Common myeloid progenitor, CD34-positive (primary cell): ENCODE measurements at regions of chr17 and their contacts with region 1.

Region 1: GRCh38 chr17:79810130-79811010 is 13.5 kb upstream of the CBX8 start:
- DNase-seq: peak; percentile 76 to 87 (median 85)
- H3K4me3 ChIP-seq: peak overlapping the region in 4 of 7 experiments; percentile 8 to 19 (median 12)
- H3K27ac ChIP-seq: no peak overlapping the region
- H3K4me1 ChIP-seq: peaks cover 0 to 60% (median 56%) of the 10 kb centered on the region in 4 experiments
- H3K27me3 ChIP-seq: peaks cover 0 to 91% (median 62%) of the 10 kb centered on the region in 5 experiments

Region 2: DNA sequence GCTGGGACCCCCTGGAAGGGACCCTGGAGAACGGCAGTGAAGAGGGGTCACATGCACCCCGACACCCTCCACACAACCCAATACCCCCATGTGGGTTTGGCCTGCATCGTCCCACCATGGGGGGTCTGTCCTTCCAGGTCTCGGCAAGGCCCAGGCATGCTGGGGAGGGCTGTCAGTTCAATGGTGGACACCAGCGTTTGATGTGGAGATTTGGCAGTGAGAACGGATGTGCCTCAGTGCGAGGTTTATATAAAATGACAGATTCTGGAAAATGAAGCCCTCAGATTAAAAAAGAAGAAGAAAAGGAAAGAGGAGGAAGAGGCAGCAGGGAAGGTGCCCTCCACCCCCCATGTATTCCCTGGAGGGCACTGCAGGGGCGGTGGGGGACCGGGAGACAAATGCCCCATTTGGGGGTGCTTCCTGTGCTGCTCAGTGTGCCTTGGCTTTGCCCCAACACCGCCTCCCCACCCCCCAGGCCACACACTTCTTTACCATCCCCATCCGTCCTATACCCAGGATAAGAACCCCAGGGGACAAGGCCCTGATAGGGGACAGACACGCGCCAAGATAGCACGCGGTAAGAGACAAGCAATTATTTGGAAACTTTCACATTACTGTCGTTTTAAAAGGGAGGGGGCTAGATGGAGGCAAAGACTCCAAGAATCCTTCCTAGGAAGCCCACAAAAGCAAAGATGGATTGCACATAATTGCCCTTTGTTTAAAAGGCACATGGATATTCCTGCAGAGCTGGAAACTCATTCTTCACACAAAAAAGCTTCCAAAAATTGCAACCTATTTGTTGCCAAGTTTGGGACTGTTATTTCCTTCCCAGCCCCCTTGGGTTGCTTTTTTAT is 220.5 kb before region 1 on chr17:
- CTCF ChIA-PET with region 1: no interaction called
- POLR2A ChIA-PET with region 1: no interaction called
- DNase-seq: no peak
- H3K4me3 ChIP-seq: no peak overlapping the region
- H3K27ac ChIP-seq: no peak overlapping the region
- H3K4me1 ChIP-seq: no peaks in the 10 kb centered on the region
- H3K27me3 ChIP-seq: peaks cover 0 to 70% (median 4%) of the 10 kb centered on the region in 5 experiments

Region 3: GRCh38 chr17:79747508-79748295 is 62.7 kb before region 1 on chr17:
- CTCF ChIA-PET with region 1: interaction called, 12 read pairs
- POLR2A ChIA-PET with region 1: no interaction called
- DNase-seq: peak in 2 of 3 donors; percentile 33 to 34
- H3K4me3 ChIP-seq: peak overlapping the region in 2 of 7 experiments; percentile 26 to 28
- H3K27ac ChIP-seq: no peak overlapping the region
- H3K4me1 ChIP-seq: peaks cover 0 to 29% (median 18%) of the 10 kb centered on the region in 4 experiments
- H3K27me3 ChIP-seq: peaks cover 0 to 62% (median 31%) of the 10 kb centered on the region in 5 experiments

Region 4: DNA sequence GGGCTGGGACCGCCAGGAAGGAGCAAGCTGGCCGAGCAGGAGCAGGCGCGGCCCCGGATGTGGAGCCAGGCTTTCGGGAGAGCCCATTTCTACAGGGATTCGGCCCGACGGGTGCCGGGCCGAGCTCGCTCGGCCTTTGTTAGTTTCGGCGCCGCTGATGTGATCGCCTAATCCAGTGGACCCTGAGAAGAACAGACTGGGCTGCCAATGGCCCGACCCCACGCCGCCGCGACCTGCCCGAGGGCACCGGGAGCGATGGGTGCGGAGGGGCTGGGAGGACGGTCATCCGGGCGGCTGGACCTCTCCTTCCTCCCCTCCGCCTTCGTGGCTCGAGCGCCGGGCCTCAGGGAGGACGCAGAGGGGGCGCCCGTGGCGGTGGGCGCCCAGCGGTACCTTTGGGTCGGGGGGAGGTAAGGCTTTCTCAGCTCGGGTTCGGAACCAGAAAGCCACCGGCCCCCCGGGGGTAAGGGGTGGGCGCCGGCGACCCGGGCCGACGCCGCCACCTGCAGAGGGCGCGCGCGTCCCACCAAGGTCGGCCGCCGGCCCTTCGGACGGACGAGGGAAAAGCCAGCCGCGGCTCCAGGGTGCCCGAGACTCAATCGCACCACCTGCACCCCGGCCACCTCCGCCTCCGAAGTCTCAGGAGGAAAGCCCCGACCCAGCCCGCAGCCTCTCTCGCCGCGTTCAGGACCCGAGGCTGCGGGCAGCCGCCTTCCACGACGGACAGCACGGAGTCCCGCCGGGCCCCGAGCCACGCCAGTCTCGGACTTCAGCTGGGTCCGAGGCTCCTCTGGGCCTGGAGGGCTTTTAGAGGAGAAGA is 20.6 kb before region 1 on chr17:
- CTCF ChIA-PET with region 1: interaction called, 12 read pairs
- POLR2A ChIA-PET with region 1: no interaction called
- DNase-seq: no peak
- H3K4me3 ChIP-seq: peak overlapping the region in 6 of 7 experiments; percentile 15 to 64 (median 58)
- H3K27ac ChIP-seq: no peak overlapping the region
- H3K4me1 ChIP-seq: peaks cover 0 to 39% (median 25%) of the 10 kb centered on the region in 4 experiments
- H3K27me3 ChIP-seq: peaks cover 0 to 58% (median 27%) of the 10 kb centered on the region in 5 experiments

Region 5: GRCh38 chr17:79826204-79826680 is 15.9 kb after region 1 on chr17:
- CTCF ChIA-PET with region 1: interaction called, 10 read pairs
- POLR2A ChIA-PET with region 1: interaction called, 4 read pairs
- DNase-seq: peak in 1 of 3 donors; percentile 57
- H3K4me3 ChIP-seq: peak overlapping the region in 3 of 7 experiments; percentile 6 to 20 (median 6)
- H3K27ac ChIP-seq: peak overlapping the region in 1 of 2 experiments; percentile 47
- H3K4me1 ChIP-seq: peaks cover 9 to 66% (median 39%) of the 10 kb centered on the region in 4 experiments
- H3K27me3 ChIP-seq: no peaks in the 10 kb centered on the region

Region 6: GRCh38 chr17:79839363-79840268 is 29.2 kb after region 1 on chr17 and contains the start of gene CBX4:
- CTCF ChIA-PET with region 1: interaction called, 36 read pairs
- POLR2A ChIA-PET with region 1: interaction called, 4 read pairs
- DNase-seq: peak; percentile 89 to 94 (median 93)
- H3K4me3 ChIP-seq: peak within 1 kb of the TSS; percentile 53 to 98 (median 87)
- H3K27ac ChIP-seq: peak within 1 kb of the TSS in 1 of 2 experiments; percentile 79
- H3K4me1 ChIP-seq: peaks cover 0 to 82% (median 77%) of the 10 kb centered on the region in 4 experiments
- H3K27me3 ChIP-seq: peaks cover 0 to 48% (median 25%) of the 10 kb centered on the region in 5 experiments

Region 7: DNA sequence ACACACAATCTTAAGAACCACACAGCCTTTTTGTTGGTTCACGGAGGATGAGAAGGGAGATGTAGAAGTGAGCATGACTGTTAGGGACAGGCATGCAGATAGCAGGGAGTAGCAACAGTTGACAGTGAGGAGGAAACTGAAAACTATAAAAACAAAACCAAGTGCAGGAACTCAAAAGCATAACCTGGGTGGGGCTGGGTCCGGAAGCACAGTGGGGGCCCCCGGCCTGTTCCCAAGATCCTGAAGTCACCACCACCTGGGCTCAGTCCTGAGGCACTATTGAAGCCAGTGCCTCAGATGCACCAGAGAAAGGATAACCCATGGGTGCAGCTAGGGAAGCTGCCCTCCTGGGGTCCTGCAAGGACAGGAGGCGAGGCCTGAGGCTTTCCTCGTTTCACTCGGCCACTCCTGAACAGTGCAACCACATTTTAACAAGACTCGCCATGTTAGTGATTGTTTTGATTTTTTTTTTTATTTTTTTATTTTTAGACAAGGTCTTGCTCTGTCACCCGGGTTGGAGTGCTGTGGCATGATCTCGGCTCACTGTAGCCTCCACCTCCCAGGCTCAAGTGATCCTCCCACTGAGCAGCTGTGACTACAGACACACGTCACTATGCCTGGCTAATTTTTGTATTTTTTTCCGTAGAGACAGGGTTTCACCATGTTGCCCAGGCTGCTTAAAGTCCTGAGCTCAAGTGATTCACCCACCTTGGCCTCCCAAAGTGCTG is 56.6 kb after region 1 on chr17:
- CTCF ChIA-PET with region 1: no interaction called
- POLR2A ChIA-PET with region 1: no interaction called
- DNase-seq: no peak
- H3K4me3 ChIP-seq: no peak overlapping the region
- H3K27ac ChIP-seq: no peak overlapping the region
- H3K4me1 ChIP-seq: peaks cover 0 to 3% (median 0%) of the 10 kb centered on the region in 4 experiments
- H3K27me3 ChIP-seq: peaks cover 0 to 5% (median 0%) of the 10 kb centered on the region in 5 experiments

Region 8: GRCh38 chr17:79915850-79916430 is 105.6 kb after region 1 on chr17:
- CTCF ChIA-PET with region 1: interaction called, 28 read pairs
- POLR2A ChIA-PET with region 1: no interaction called
- DNase-seq: peak; percentile 42 to 56 (median 51)
- H3K4me3 ChIP-seq: no peak overlapping the region
- H3K27ac ChIP-seq: no peak overlapping the region
- H3K4me1 ChIP-seq: peaks cover 0 to 2% (median 0%) of the 10 kb centered on the region in 4 experiments
- H3K27me3 ChIP-seq: peaks cover 0 to 8% (median 4%) of the 10 kb centered on the region in 5 experiments

Region 9: GRCh38 chr17:79942591-79943346 is 132.4 kb after region 1 on chr17:
- CTCF ChIA-PET with region 1: no interaction called
- POLR2A ChIA-PET with region 1: no interaction called
- DNase-seq: peak; percentile 84 to 99 (median 96)
- H3K4me3 ChIP-seq: peak overlapping the region in 2 of 7 experiments; percentile 36 to 57
- H3K27ac ChIP-seq: peak overlapping the region in 1 of 2 experiments; percentile 40
- H3K4me1 ChIP-seq: peaks cover 0 to 31% (median 21%) of the 10 kb centered on the region in 4 experiments
- H3K27me3 ChIP-seq: no peaks in the 10 kb centered on the region